IMR-90 (cell line): ENCODE measurements at regions of chr5 and their contacts with region 1.

Region 1: DNA sequence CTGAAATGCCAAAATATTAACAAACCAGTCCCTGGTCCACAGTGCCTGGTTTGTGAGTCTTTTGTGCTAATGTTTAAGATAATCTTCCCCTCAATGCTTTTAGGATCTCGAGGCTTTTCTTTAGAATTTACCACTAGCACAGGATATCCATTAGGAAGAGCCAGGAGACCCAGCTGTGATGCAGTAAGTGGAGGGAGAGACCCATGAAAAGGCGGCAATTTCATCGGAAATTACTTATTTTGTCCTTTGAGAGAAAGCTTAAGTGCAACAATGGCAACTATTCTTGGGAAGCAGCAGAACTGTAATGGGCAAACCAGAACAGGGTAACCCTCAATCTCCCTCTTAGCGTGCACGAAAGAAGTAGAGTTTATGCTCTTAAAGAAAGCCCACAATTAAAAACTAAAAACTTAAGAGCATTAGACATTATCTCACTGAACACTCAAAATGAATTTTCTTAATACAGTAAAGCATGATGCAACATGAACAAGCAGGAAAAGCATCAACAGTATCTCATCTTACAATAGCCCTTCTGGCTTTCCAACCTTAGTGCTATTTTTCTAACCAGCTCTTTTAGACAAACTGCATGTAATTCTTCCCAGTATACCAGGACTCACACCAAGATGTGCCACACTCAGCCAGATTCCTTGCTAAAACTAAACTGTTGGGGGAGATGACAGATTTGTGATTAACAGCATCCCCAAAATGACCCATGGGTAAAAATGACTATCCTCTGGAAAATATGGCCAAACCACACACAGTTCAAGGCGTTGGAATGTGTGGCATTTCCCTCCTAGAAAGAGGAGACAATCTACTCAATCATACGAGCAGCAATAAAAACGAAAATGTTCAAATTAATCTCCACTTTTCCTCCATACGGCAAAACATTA is 36.4 kb downstream of the PWWP2A start:
- DNase-seq: peak; percentile 81
- ATAC-seq: peak; percentile 83
- H3K4me3 ChIP-seq: no peak overlapping the region; the same call in 1 of the 2 replicates
- H3K27ac ChIP-seq: peak overlapping the region; percentile 89
- H3K4me1 ChIP-seq: peaks cover 12% of the 10 kb centered on the region
- H3K27me3 ChIP-seq: no peaks in the 10 kb centered on the region
- CTCF ChIP-seq: no peak
- POLR2A ChIP-seq: no peak
- RAD21 ChIP-seq: no peak

Region 2: DNA sequence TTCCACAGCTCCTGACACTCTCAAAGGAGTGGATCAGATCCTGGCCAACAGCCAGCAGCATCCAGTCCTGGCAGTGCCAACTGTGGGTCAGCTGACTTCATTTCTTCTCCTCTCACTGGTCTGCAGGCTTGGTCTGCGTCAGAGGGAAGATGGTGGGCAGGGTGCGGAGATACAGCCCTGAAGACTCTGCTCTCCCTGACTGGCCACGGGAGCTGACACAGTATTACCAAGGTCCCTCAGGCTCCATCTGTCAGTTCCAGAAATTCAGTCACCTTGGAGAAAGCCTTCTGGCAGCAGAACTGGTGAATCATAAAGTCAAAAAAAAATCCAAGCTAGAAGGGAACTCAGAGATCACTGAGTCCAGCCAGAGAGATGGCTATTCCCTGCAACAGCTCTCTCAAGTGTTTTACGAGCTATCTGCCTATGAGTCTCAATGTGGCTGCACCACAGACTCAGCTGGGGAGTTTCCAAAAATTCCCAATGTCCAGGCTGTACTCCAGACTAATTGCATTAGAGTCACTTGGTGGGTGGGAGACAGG is 259.6 kb after region 1 on chr5:
- CTCF ChIA-PET with region 1: interaction called, 5 read pairs
- POLR2A ChIA-PET with region 1: no interaction called
- dilution Hi-C with region 1: no loop called
- in situ Hi-C with region 1: no loop called
- intact Hi-C with region 1: loop called (anchors 1 kb)
- DNase-seq: peak; percentile 61
- ATAC-seq: no peak
- H3K4me3 ChIP-seq: no peak overlapping the region
- H3K27ac ChIP-seq: no peak overlapping the region
- H3K4me1 ChIP-seq: peaks cover 2% of the 10 kb centered on the region; the same call in 1 of the 2 replicates
- H3K27me3 ChIP-seq: no peaks in the 10 kb centered on the region
- CTCF ChIP-seq: no peak
- POLR2A ChIP-seq: no peak
- RAD21 ChIP-seq: no peak